ENCODE measurements at regions of chr1 and their contacts with region 1.

Region 1: DNA sequence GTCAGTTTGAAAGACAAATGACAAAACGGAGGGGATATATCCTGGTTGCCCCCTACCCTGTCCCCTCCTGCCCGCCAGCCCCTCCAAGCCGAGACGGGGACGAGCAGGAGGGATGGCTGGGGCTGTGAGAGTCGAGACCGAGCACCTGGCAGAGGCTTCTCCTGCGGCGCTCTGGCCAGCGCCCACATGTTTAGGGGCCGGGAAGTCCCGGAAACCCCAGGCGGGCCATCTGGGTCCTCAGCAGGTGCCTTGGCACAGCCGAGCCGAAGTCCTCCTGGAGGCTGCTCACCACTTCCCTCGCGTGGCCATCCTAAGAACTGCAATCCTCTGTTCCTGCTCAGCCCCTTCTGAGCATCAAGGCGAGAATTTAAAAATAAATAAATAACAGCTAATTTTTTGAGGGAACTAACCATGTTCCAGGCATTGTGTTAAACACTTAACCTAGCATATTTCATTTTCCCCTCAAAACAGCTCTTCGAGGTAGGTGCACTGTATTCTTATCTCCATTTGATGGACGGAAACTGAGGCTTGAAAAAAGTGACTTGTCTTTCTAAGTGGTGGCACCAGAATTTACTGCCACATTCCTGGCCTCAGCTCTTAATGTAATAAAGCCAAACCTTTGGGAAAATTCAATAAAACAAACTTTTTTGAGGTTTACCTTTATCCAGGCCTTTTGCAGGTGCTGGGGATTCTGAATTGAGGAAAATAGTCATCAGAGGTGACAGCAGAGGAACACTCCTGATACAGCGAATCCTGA is 3.5 kb upstream of the RIMS3 start:
- DNase-seq: peak; percentile 82
- ATAC-seq: peak; percentile 74
- H3K4me3 Mint-ChIP-seq: peak overlapping the region; percentile 75
- H3K27ac Mint-ChIP-seq: peak overlapping the region; percentile 41
- H3K4me1 Mint-ChIP-seq: peaks cover 31% of the 10 kb centered on the region
- H3K27me3 Mint-ChIP-seq: no peaks in the 10 kb centered on the region
- CTCF ChIP-seq: peak; percentile 76

Region 2: GRCh38 chr1:40143891-40144575 is 524.9 kb before region 1 on chr1:
- CTCF ChIA-PET with region 1: interaction called, 7 read pairs
- POLR2A ChIA-PET with region 1: no interaction called
- intact Hi-C with region 1: loop called (anchors 1 kb)
- DNase-seq: peak; percentile 22
- ATAC-seq: peak; percentile 83
- H3K4me3 Mint-ChIP-seq: no peak overlapping the region
- H3K27ac Mint-ChIP-seq: no peak overlapping the region
- H3K4me1 Mint-ChIP-seq: peaks cover 6% of the 10 kb centered on the region
- H3K27me3 Mint-ChIP-seq: peaks cover 9% of the 10 kb centered on the region
- CTCF ChIP-seq: no peak

Region 3: GRCh38 chr1:40385437-40386358 is 283.2 kb before region 1 on chr1:
- CTCF ChIA-PET with region 1: no interaction called
- POLR2A ChIA-PET with region 1: no interaction called
- intact Hi-C with region 1: no loop called
- DNase-seq: no peak
- ATAC-seq: peak; percentile 71
- H3K4me3 Mint-ChIP-seq: peak overlapping the region; percentile 74
- H3K27ac Mint-ChIP-seq: peak overlapping the region; percentile 96
- H3K4me1 Mint-ChIP-seq: peaks cover 97% of the 10 kb centered on the region
- H3K27me3 Mint-ChIP-seq: no peaks in the 10 kb centered on the region
- CTCF ChIP-seq: no peak

Region 4: GRCh38 chr1:40531381-40532061 is 137.4 kb before region 1 on chr1 and contains the start of gene ZNF684:
- CTCF ChIA-PET with region 1: interaction called, 4 read pairs
- POLR2A ChIA-PET with region 1: no interaction called
- intact Hi-C with region 1: loop called (anchors 1 kb)
- DNase-seq: peak; percentile 65
- ATAC-seq: peak; percentile 98
- H3K4me3 Mint-ChIP-seq: peak within 1 kb of the TSS; percentile 97
- H3K27ac Mint-ChIP-seq: peak within 1 kb of the TSS; percentile 92
- H3K4me1 Mint-ChIP-seq: peaks cover 29% of the 10 kb centered on the region
- H3K27me3 Mint-ChIP-seq: peaks cover 2% of the 10 kb centered on the region
- CTCF ChIP-seq: no peak
- total RNA-seq, gene ZNF684: 5.0 and 5.4 TPM in 2 replicates

Region 5: DNA sequence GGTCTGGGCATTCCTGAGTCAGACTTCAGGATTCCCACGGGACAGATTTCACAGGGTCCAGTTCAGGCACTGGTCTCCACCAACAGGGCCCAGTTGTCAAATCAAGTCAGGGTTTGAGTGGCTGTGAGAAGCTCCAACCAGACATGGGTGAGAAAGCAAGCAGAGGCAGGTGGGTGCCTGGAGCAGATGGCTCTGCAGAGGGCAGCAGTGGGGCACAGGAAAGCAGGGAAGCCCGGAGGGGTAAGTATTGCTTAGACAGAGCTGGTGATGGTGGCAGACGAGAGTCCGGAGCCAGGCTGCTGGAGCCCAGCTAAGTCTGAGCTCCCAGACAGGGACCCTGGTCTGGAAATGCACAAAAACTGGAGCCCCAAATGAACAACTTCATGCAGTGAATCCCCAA is 43.9 kb before region 1 on chr1:
- CTCF ChIA-PET with region 1: interaction called, 6 read pairs
- POLR2A ChIA-PET with region 1: no interaction called
- intact Hi-C with region 1: loop called (anchors 1 kb)
- DNase-seq: no peak
- ATAC-seq: peak; percentile 64
- H3K4me3 Mint-ChIP-seq: no peak overlapping the region
- H3K27ac Mint-ChIP-seq: no peak overlapping the region
- H3K4me1 Mint-ChIP-seq: peaks cover 12% of the 10 kb centered on the region
- H3K27me3 Mint-ChIP-seq: peaks cover 12% of the 10 kb centered on the region
- CTCF ChIP-seq: no peak

Region 6: DNA sequence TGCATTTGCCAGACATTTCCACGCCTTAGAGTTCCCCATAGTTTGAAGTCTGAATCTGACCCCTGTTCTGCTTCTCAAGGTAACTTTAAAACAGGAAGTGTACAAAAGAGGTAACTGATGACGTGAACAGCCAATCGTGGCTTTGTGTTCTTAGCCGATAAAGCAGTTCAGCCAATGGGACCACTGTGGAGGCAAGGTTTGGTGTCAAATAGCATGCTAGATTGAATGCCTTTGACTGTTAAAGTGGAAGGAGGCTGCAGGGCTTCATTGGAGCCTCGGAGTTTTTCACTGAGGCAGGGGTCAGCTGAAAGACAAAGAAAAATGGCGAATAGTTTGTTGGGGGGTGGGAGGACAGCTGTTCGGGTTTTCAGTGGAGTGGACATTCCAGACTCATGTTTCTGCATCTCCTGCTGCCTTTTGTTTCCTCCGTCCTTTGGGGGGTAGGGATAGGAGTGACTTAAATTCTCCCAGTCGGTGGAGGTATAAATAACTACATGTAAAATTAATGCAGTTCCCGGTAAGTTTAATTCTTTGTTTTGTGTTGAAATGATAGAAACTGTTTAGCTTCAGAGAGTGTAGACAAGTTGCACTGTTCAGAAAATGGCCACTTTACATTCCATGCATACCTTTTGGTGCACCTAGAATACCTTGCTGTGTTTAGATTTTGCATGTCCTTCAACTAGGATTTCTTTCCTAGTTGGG is 40.3 kb after region 1 on chr1:
- CTCF ChIA-PET with region 1: no interaction called
- POLR2A ChIA-PET with region 1: no interaction called
- intact Hi-C with region 1: loop called (anchors 2 kb)
- DNase-seq: peak; percentile 30
- ATAC-seq: peak; percentile 89
- H3K4me3 Mint-ChIP-seq: peak overlapping the region; percentile 95
- H3K27ac Mint-ChIP-seq: peak overlapping the region; percentile 95
- H3K4me1 Mint-ChIP-seq: peaks cover 75% of the 10 kb centered on the region
- H3K27me3 Mint-ChIP-seq: no peaks in the 10 kb centered on the region
- CTCF ChIP-seq: no peak

Region 7: DNA sequence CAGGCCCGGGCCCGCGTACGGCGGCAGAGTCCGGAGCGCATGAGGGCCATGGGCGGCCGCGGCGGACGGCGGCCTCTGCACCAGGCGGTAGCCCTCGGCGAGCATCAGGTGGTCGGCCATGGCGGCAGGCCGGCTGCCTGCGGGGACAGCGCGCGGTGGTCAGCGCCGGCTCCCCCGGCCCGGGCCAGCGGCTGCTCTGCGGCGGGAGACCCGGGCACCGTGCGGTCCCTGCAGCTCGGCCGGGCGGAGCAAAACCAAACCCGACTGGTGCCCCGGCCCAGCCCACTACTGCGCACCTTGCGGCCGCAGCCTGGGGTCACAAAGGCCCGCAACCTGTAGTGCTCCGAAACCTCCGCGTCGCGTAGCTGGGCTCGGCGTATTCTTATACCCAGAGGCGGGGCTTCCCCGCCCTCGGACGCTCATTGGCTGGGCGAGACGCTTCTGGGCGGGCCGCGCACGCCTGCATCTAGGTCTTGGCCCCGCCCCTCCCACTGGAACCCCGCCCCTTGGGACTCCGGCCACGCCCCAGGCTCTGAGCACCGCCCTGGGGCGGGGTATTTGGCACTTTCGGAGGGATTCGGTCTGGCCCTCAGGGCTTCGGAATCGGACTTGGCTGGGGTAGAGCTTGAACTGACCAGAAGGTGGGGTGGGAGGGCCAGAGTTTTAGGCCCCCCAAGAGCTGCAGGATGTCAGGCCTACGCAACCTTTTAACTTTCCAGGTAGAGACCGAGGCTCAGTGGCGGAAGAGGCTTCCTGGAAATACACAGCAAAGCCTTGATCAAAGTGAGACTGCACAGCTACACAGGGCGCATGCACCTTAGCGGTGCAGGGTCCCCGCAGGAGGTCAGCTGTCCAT is 193.3 kb after region 1 on chr1 and contains the start of gene CITED4:
- CTCF ChIA-PET with region 1: no interaction called
- POLR2A ChIA-PET with region 1: no interaction called
- intact Hi-C with region 1: loop called (anchors 2 kb)
- DNase-seq: peak; percentile 93
- ATAC-seq: peak; percentile 98
- H3K4me3 Mint-ChIP-seq: peak within 1 kb of the TSS; percentile 94
- H3K27ac Mint-ChIP-seq: peak within 1 kb of the TSS; percentile 82
- H3K4me1 Mint-ChIP-seq: peaks cover 10% of the 10 kb centered on the region
- H3K27me3 Mint-ChIP-seq: peaks cover 12% of the 10 kb centered on the region
- CTCF ChIP-seq: no peak
- total RNA-seq, gene CITED4: 0.54 and 0.98 TPM in 2 replicates